CD4-positive, alpha-beta memory T cell (primary cell): ENCODE measurements at regions of chr16 and their contacts with region 1.

Region 1: GRCh38 chr16:75305364-75306098 is 54.1 kb upstream of the BCAR1 start:
- DNase-seq: peak in 4 of 5 donors; percentile 17 to 51 (median 34)
- H3K4me3 ChIP-seq: no peak overlapping the region
- H3K4me3 Mint-ChIP-seq: peak overlapping the region in 2 of 8 donors; percentile 27 to 53
- H3K27ac ChIP-seq: no peak overlapping the region
- H3K27ac Mint-ChIP-seq: peak overlapping the region in 4 of 7 donors; percentile 9 to 61 (median 49)
- H3K4me1 ChIP-seq: peaks cover 18% of the 10 kb centered on the region
- H3K4me1 Mint-ChIP-seq: peaks cover 16 to 34% (median 21%) of the 10 kb centered on the region in 4 donors
- H3K27me3 ChIP-seq: no peaks in the 10 kb centered on the region
- H3K27me3 Mint-ChIP-seq: no peaks in the 10 kb centered on the region

Region 2: GRCh38 chr16:75385507-75386152 is 80.1 kb after region 1 on chr16:
- CTCF ChIA-PET with region 1: interaction called, 13 read pairs
- POLR2A ChIA-PET with region 1: no interaction called
- intact Hi-C with region 1: no loop called
- DNase-seq: peak in 4 of 5 donors; percentile 53 to 63 (median 60)
- H3K4me3 ChIP-seq: no peak overlapping the region
- H3K4me3 Mint-ChIP-seq: no peak overlapping the region
- H3K27ac ChIP-seq: no peak overlapping the region
- H3K27ac Mint-ChIP-seq: no peak overlapping the region
- H3K4me1 ChIP-seq: peaks cover 26% of the 10 kb centered on the region
- H3K4me1 Mint-ChIP-seq: peaks cover 20 to 38% (median 34%) of the 10 kb centered on the region in 4 donors
- H3K27me3 ChIP-seq: no peaks in the 10 kb centered on the region
- H3K27me3 Mint-ChIP-seq: no peaks in the 10 kb centered on the region